ENCODE measurements at regions of chr17 and their contacts with region 1.

Region 1: DNA sequence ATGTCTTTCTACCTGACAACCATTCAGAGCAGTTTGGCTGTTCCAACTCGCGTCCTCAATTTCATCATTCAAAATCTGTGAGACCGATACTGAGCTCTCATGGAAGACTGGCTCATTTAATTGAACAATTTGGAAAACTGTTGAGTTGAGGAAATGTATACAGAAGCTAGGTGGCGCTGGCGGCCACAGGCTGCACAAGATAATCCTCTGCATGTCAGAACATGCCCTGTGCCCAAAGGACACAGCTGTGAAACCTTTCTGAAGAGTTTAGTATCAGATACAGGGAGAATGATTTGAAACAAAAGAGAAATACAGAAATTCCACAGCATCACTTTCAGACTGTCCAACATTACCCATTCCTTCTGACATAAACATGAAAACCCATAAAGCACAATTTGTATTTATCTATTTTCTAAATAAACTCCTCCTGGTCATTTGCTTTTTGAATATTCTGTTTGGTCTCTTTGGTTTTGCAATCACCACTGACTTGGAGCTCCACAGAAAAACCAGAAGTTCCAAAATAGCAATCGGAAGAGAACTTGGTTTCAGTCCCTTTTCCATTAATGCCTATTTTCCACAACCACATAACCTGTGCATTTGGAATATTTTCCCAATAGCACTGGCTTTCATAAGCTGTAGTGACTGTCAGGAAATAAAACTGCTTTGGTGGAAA is 192.8 kb downstream of the MAP2K6 start:
- DNase-seq: peak; percentile 75
- H3K4me3 ChIP-seq: no peak overlapping the region
- H3K27ac ChIP-seq: peak overlapping the region in 3 of 4 donors; percentile 4 to 16 (median 9)
- H3K4me1 ChIP-seq: peaks cover 0 to 22% (median 12%) of the 10 kb centered on the region in 4 donors
- H3K27me3 ChIP-seq: no peaks in the 10 kb centered on the region
- CTCF ChIP-seq: peak; percentile 65 to 86 (median 75)
- EP300 ChIP-seq: no peak
- POLR2A ChIP-seq: no peak

Region 2: GRCh38 chr17:69696650-69697049 is 89.4 kb after region 1 on chr17:
- in situ Hi-C with region 1: no loop called
- intact Hi-C with region 1: no loop called
- DNase-seq: no peak
- H3K4me3 ChIP-seq: no peak overlapping the region
- H3K27ac ChIP-seq: no peak overlapping the region
- H3K4me1 ChIP-seq: no peaks in the 10 kb centered on the region
- H3K27me3 ChIP-seq: no peaks in the 10 kb centered on the region
- CTCF ChIP-seq: no peak
- EP300 ChIP-seq: no peak
- POLR2A ChIP-seq: no peak

Region 3: DNA sequence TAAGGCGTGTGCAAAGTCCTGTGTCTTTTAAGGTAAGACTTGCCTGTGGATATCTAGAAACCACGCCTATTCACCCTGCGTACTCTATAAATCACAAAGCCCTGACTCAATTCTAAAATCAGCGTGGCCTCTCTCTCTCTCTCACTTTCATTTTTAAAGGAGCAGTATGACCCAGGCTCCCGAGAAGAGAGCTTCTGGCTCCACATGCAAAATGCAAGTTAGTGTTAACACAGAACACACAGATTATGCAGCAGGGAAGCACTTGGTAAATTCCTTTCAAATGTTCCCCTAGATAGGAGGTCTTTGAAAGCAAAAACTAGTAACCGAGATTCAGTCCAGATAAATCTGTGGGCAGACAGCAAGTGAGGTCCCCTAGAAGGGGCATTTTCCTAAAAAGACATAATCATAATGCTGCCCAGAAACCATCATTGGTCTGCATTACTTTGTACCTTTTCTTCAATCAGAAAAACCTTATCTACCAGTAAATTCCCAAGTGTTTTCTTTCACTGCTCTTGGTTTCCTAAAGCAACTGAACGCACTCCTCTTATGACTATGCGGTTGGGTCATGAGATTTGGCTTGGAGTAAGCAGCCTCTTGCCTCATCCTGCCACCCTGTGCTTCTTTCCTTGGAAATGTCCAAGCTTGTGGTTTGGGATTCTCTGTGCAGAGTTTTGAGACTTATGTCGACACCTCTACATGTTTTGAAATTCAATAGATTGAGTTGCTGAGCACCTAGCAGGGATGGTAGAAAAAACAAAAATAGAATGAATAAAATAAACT is 530.3 kb after region 1 on chr17:
- in situ Hi-C with region 1: no loop called
- intact Hi-C with region 1: loop called (anchors 10 kb)
- DNase-seq: peak; percentile 32
- H3K4me3 ChIP-seq: peak overlapping the region in 3 of 4 donors; percentile 20 to 38 (median 27)
- H3K27ac ChIP-seq: peak overlapping the region; percentile 73 to 79 (median 76)
- H3K4me1 ChIP-seq: peaks cover 3 to 40% (median 18%) of the 10 kb centered on the region in 4 donors
- H3K27me3 ChIP-seq: no peaks in the 10 kb centered on the region
- CTCF ChIP-seq: no peak
- EP300 ChIP-seq: no peak
- POLR2A ChIP-seq: no peak

Measured in transverse colon (tissue), 4 donors.